ENCODE measurements at regions of chr18 and their contacts with region 1.

Region 1: DNA sequence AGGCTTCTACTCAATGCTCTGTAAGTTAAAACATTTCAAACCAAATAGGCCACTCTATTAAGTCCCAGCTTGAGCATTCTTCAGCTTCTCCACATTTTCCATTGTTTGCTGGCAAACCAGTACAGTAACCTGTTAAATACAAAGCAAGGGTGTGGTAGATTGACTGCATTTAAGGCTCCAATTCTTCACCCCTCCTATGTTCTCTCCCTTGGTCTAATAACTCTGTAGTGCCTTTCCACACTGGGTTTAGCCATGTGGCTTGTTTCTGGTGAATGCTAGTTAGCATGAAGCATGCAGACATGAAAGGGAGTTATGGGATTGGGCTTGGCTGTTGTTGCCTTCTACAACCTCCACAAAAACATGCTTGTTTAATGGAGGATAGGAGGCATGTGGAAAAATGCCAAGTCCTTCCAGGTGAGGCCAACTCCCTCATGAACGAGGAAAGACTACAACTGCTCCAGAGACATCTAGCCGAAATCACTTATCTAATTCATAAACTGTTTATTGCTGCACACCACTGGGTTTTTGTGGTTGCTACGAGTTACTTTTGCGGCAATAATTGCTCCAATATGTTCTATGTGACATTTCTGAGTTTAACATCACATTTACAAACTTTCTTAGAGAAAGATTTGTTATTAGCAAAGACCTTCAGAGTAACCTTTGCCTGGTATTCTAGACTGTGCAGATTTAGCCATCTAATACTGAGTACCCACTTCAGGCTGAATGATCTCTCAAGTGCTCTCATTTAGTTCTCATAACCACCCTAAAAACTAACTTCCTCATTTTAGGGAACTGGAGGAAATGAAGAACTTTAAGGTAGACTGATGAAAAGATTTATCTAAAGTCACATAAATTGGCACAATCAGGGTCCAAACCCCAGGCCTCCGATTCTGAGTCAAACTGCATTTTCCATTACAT is 104.0 kb downstream of the SMAD2 start:
- DNase-seq: no peak
- ATAC-seq: no peak

Region 2: DNA sequence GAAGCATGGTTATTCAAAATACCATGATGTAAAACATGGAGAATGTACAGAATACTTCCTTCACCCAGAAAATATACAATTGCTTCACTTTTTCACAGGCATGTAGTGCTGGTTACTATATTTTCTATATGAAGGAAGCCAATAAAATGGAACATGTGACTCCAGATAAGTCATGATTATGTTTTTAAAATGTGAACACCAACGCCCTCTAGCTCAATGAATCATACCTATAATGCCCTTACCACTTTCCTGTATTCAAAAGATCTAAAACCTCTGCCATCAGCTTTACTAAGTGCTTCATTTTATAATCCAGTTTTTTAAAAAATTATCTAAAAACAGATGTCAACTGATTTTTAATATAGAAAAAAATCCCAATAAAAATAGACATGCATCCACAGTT is 44.2 kb after region 1 on chr18:
- intact Hi-C with region 1: no loop called
- DNase-seq: no peak
- ATAC-seq: no peak

Region 3: GRCh38 chr18:48719974-48720654 is 893.7 kb after region 1 on chr18:
- intact Hi-C with region 1: no loop called
- DNase-seq: no peak
- ATAC-seq: no peak

Region 4: DNA sequence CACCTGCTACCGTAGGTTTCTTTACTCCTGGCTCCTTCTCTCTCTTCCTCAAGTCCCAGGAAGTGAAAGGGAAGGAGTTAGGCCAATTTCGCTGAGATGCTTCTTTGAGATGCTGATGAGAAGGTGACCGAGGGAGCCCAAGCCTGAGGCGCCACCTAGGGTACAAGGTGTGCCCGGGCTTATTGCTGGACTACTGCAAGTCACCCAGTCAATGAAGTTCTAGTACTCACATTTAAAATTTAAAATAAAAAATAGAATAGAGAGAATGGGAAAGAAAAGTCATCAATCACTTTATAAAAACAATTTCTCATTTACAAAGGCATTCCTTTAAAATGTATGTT is 1941.6 kb after region 1 on chr18:
- intact Hi-C with region 1: loop called (anchors 10 kb)
- DNase-seq: peak; percentile 71
- ATAC-seq: peak; percentile 76